ENCODE measurements at regions of chr3 and their contacts with region 1.

Region 1: GRCh38 chr3:138686771-138687221 is 78.2 kb downstream of the FAIM start:
- DNase-seq: no peak
- ATAC-seq: peak; percentile 77
- H3K4me3 Mint-ChIP-seq: peak overlapping the region; percentile 44
- H3K27ac Mint-ChIP-seq: peak overlapping the region; percentile 92
- H3K4me1 Mint-ChIP-seq: peaks cover 38% of the 10 kb centered on the region
- H3K27me3 Mint-ChIP-seq: no peaks in the 10 kb centered on the region
- CTCF ChIP-seq: no peak

Region 2: DNA sequence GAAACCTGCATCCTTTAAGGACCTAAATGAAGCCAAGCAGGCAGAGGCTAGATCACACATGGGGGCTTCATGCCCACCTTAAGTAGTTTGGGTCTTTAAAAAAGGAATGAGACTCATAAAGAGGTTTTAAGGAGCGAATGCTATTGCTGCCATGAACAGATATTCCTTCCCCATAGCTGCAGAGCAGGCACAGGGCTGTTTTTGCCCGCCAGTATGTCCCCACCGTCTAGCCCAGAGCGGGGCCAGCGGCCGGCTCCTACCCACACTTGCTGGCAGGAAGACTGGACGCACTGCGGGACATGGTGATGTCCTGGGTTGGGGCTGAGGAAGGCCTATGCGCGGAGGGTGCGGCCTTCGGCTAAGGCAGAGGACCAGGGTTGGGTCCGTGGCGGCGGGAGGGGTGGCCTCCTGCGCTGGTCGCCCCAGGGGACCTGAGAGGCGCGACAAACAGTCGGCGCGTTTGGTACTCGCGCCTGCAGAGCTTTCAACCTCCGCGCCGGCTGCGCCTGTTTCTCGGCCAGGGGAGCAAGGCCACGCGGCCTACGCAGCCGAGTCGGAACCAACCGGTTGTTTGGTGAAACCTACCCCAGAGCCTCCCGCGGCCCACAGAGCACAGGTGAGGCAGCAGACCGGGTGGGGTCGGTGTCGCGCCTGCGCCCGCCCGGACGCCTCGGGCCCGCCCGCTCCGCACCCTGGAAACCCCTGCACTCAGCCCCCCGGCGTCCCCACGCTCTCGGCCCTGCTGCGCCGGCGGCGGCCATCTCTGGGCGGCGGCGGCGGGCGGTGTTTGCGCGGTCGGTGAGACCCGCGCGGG is 78.3 kb before region 1 on chr3 and contains the start of gene FAIM:
- CTCF ChIA-PET with region 1: no interaction called
- POLR2A ChIA-PET with region 1: interaction called, 3 read pairs
- intact Hi-C with region 1: loop called (anchors 1 kb)
- DNase-seq: peak; percentile 71
- ATAC-seq: peak; percentile 75
- H3K4me3 Mint-ChIP-seq: peak within 1 kb of the TSS; percentile 87
- H3K27ac Mint-ChIP-seq: peak within 1 kb of the TSS; percentile 83
- H3K4me1 Mint-ChIP-seq: peaks cover 23% of the 10 kb centered on the region
- H3K27me3 Mint-ChIP-seq: no peaks in the 10 kb centered on the region
- CTCF ChIP-seq: no peak
- total RNA-seq, gene FAIM: 10.5 and 11.5 TPM in 2 replicates

Region 3: GRCh38 chr3:138670407-138670806 is 16.4 kb before region 1 on chr3:
- CTCF ChIA-PET with region 1: no interaction called
- POLR2A ChIA-PET with region 1: interaction called, 4 read pairs
- intact Hi-C with region 1: loop called (anchors 2 kb)
- DNase-seq: no peak
- ATAC-seq: no peak
- H3K4me3 Mint-ChIP-seq: no peak overlapping the region
- H3K27ac Mint-ChIP-seq: no peak overlapping the region
- H3K4me1 Mint-ChIP-seq: no peaks in the 10 kb centered on the region
- H3K27me3 Mint-ChIP-seq: no peaks in the 10 kb centered on the region
- CTCF ChIP-seq: no peak

Region 4: DNA sequence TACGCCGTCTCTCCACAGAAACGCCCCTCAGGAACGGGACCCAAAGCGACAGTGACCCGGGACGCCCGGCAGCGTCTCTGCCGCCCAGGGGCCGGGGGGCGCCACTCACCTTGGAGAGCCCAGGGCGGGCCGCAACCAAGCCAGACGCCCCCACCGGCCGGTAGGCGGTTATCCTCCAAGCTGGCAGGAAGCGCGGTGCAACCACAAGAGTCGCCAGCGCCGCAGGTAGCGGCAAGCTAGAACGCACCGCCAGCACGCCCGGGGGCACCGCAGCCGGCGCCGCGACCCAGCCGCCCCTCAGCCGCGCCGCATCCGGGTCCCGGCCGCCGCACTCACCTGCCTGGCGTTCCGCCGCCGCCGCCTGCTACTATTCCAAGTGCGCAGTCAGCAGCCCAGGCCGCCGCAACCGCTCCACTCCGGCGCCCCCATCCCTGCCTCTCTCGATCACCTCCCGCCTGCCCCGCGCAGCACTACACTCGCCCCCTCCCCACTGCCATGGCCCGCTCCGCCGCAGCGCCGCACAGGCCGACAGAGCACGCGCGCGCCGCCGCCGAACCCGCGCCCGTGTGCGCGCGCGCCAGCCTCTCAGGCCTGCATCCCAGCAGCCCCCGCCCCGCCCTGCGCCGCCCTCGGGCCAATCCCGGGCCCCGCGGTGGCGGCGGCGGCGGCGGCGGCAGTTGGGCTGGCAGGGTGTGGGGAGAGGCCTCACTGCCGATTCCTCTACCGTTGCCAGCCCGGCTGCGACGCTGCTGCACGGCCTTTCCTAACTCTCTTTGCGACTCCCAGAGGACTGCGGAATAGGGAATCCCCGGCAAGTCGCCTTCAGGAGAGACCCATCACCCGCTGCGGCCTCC is 147.8 kb after region 1 on chr3 and contains the start of gene PIK3CB:
- CTCF ChIA-PET with region 1: no interaction called
- POLR2A ChIA-PET with region 1: no interaction called
- intact Hi-C with region 1: loop called (anchors 5 kb)
- DNase-seq: peak; percentile 85
- ATAC-seq: peak; percentile 94
- H3K4me3 Mint-ChIP-seq: peak within 1 kb of the TSS; percentile 92
- H3K27ac Mint-ChIP-seq: peak within 1 kb of the TSS; percentile 95
- H3K4me1 Mint-ChIP-seq: peaks cover 24% of the 10 kb centered on the region
- H3K27me3 Mint-ChIP-seq: no peaks in the 10 kb centered on the region
- CTCF ChIP-seq: no peak
- total RNA-seq, gene PIK3CB: 19.9 and 21.9 TPM in 2 replicates

Region 5: GRCh38 chr3:138862924-138863775 is 176.4 kb after region 1 on chr3:
- CTCF ChIA-PET with region 1: no interaction called
- POLR2A ChIA-PET with region 1: no interaction called
- intact Hi-C with region 1: no loop called
- DNase-seq: no peak
- ATAC-seq: no peak
- H3K4me3 Mint-ChIP-seq: no peak overlapping the region
- H3K27ac Mint-ChIP-seq: no peak overlapping the region
- H3K4me1 Mint-ChIP-seq: no peaks in the 10 kb centered on the region
- H3K27me3 Mint-ChIP-seq: no peaks in the 10 kb centered on the region
- CTCF ChIP-seq: no peak

Region 6: DNA sequence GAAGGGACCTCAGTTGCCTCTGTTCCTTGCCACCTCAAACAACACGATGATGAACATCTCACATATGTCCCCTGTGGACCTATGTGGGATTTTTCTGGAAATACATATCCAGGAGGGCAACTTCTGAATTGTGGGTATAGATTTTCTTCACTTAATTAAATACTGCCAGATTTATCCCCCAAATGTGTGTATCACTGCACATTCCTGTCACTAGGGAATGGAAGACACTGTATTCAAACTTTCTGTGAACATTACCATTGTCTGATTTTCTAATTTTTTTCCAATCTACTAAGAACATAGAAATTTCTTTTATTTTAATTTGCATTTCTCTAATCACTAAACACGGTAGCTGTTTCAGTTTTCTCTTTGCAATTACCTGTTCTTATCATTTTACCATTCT is 555.0 kb after region 1 on chr3:
- CTCF ChIA-PET with region 1: no interaction called
- POLR2A ChIA-PET with region 1: no interaction called
- intact Hi-C with region 1: no loop called
- DNase-seq: no peak
- ATAC-seq: no peak
- H3K4me3 Mint-ChIP-seq: no peak overlapping the region
- H3K27ac Mint-ChIP-seq: no peak overlapping the region
- H3K4me1 Mint-ChIP-seq: no peaks in the 10 kb centered on the region
- H3K27me3 Mint-ChIP-seq: peaks cover 16% of the 10 kb centered on the region
- CTCF ChIP-seq: no peak